CD8-positive, alpha-beta memory T cell (primary cell): ENCODE measurements at regions of chr18 and their contacts with region 1.

Region 1: DNA sequence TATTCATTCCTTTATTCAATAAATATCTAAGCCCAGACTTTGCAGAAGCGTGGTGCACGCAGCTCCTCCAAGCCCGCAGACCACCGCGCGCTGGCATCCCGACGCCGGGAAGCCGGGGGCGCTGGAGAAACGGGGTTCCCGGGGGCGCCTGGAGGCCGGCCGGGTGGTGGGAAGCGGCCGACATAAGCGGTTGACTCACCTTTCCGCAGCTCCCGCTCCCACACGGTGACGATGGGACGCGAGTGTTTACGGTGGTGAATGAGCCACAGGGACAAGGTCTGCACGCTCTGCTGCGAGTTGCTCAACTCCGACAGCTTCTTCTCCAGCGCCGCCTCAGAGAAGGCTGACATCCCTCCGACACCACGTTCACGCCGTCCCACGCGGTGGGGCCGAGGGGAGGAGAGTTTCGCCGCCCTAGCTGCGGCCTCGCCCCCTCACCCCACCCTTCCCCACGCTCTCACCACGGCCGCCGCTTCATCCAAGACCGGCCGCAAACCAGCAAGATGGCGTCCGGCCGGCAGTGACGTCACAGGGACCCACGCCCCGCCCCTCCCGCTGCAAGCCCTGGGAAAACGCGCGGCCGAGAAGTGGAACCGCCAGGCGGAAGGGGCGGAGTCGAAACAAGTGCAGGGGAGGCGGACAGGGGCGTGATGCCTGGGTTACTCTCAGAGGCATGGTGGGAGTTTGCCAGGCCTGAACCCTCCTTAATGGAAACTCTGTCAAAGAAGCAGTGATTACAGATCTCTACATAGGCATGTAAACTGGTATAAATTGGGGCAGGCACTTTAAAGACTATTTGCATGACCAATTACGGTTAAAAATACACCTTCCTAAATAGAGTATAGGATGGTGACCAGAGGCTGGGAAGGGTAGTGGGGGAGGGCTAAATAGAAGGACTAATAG is at the start of gene RPRD1A:
- DNase-seq: peak; percentile 94 to 96 (median 95)
- H3K4me3 ChIP-seq: peak within 1 kb of the TSS; percentile 78
- H3K4me3 Mint-ChIP-seq: peak within 1 kb of the TSS; percentile 92 to 96 (median 94)
- H3K27ac ChIP-seq: peak within 1 kb of the TSS; percentile 88
- H3K27ac Mint-ChIP-seq: peak within 1 kb of the TSS; percentile 73 to 97 (median 94)
- H3K4me1 ChIP-seq: peaks cover 25% of the 10 kb centered on the region
- H3K4me1 Mint-ChIP-seq: peaks cover 39 to 49% (median 46%) of the 10 kb centered on the region in 3 donors
- H3K27me3 ChIP-seq: no peaks in the 10 kb centered on the region
- H3K27me3 Mint-ChIP-seq: peaks cover 0 to 5% of the 10 kb centered on the region in 2 donors
- total RNA-seq, gene RPRD1A: 22.0 to 23.5 TPM

Region 2: DNA sequence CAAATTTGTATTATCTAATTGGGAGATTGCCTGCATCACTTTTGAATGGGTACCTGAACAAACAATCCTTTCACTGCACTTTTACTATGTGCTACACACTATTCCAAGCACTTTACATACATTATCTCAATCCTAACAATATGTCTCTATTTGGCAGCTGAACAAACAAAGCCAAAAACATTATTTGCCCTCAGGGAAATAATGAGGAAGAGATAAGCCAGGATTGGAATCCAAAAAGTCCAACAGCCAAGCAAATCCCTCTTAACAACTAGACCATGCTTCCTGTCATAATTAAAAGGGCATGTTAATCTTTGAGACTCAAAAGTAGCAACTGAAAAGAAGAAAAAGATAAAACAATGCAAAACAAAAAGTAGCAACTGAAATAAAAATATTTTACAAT is 32.1 kb before region 1 on chr18:
- CTCF ChIA-PET with region 1: no interaction called
- POLR2A ChIA-PET with region 1: interaction called, 12 read pairs
- DNase-seq: no peak
- H3K4me3 ChIP-seq: no peak overlapping the region
- H3K4me3 Mint-ChIP-seq: no peak overlapping the region
- H3K27ac ChIP-seq: no peak overlapping the region
- H3K27ac Mint-ChIP-seq: peak overlapping the region in 2 of 8 donors; percentile 3 to 11
- H3K4me1 ChIP-seq: no peaks in the 10 kb centered on the region
- H3K4me1 Mint-ChIP-seq: peaks cover 26 to 53% (median 46%) of the 10 kb centered on the region in 3 donors
- H3K27me3 ChIP-seq: no peaks in the 10 kb centered on the region
- H3K27me3 Mint-ChIP-seq: no peaks in the 10 kb centered on the region

Region 3: GRCh38 chr18:36120300-36120778 is 53.0 kb after region 1 on chr18:
- CTCF ChIA-PET with region 1: no interaction called
- POLR2A ChIA-PET with region 1: no interaction called
- DNase-seq: no peak
- H3K4me3 ChIP-seq: no peak overlapping the region
- H3K4me3 Mint-ChIP-seq: no peak overlapping the region
- H3K27ac ChIP-seq: no peak overlapping the region
- H3K27ac Mint-ChIP-seq: no peak overlapping the region
- H3K4me1 ChIP-seq: no peaks in the 10 kb centered on the region
- H3K4me1 Mint-ChIP-seq: peaks cover 2 to 8% (median 6%) of the 10 kb centered on the region in 3 donors
- H3K27me3 ChIP-seq: no peaks in the 10 kb centered on the region
- H3K27me3 Mint-ChIP-seq: no peaks in the 10 kb centered on the region